ENCODE measurements at regions of chr12 and their contacts with region 1.

Region 1: GRCh38 chr12:68686595-68687521 is at the start of gene NUP107:
- DNase-seq: peak; percentile 92
- CTCF ChIP-seq: no peak

Region 2: DNA sequence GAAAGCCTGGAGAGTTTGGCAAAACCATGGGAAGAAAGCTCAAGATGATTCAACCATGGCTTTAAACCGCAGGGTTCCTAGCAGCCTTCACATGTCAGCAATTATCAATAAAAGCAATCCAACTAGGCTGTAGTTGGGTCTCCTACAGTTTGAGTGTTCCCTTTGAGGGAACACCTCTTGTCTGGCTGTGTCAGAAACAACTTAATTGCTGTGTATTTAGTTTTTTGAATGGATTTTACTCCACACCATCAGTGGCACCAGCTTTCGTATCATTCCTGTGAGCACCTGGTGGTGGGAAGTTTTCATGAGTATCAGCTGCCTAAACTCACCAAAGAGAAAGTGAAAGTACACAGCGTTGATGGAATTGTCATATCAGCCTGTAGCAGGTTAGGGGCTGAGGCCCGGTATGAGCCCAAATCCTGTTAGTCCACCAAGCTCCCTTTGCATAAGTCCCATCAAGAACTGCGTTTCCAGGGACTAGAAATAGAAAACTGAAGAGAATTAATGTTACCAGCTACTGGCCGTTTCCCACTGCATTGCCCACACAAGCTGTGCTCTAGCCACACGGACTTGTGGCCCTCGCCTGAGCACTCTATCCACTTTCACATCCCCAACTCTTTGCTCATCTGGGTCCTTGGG is 450.3 kb before region 1 on chr12:
- in situ Hi-C with region 1: loop called (anchors 25 kb)
- DNase-seq: peak; percentile 27
- CTCF ChIP-seq: no peak

Region 3: GRCh38 chr12:68821357-68822188 is 134.7 kb after region 1 on chr12:
- in situ Hi-C with region 1: no loop called
- DNase-seq: no peak
- CTCF ChIP-seq: no peak